Naive thymus-derived CD4-positive, alpha-beta T cell (primary cell): ENCODE measurements at regions of chr10 and their contacts with region 1.

Region 1: GRCh38 chr10:22316285-22317120 is at the start of gene COMMD3:
- DNase-seq: peak; percentile 71 to 85 (median 80)
- ATAC-seq: peak; percentile 84
- H3K4me3 ChIP-seq: peak within 1 kb of the TSS; percentile 73
- H3K4me3 Mint-ChIP-seq: peak within 1 kb of the TSS; percentile 85 to 99 (median 96)
- H3K27ac ChIP-seq: peak within 1 kb of the TSS; percentile 80
- H3K27ac Mint-ChIP-seq: peak within 1 kb of the TSS; percentile 87 to 99 (median 96)
- H3K4me1 ChIP-seq: peaks cover 16 to 25% of the 10 kb centered on the region in 2 donors
- H3K4me1 Mint-ChIP-seq: peaks cover 11 to 53% (median 46%) of the 10 kb centered on the region in 7 donors
- H3K27me3 ChIP-seq: peaks cover 0 to 13% of the 10 kb centered on the region in 2 donors
- H3K27me3 Mint-ChIP-seq: peaks cover 0 to 18% (median 14%) of the 10 kb centered on the region in 5 donors
- total RNA-seq, gene COMMD3: 33.9 to 83.7 (median 51.2) TPM

Region 2: DNA sequence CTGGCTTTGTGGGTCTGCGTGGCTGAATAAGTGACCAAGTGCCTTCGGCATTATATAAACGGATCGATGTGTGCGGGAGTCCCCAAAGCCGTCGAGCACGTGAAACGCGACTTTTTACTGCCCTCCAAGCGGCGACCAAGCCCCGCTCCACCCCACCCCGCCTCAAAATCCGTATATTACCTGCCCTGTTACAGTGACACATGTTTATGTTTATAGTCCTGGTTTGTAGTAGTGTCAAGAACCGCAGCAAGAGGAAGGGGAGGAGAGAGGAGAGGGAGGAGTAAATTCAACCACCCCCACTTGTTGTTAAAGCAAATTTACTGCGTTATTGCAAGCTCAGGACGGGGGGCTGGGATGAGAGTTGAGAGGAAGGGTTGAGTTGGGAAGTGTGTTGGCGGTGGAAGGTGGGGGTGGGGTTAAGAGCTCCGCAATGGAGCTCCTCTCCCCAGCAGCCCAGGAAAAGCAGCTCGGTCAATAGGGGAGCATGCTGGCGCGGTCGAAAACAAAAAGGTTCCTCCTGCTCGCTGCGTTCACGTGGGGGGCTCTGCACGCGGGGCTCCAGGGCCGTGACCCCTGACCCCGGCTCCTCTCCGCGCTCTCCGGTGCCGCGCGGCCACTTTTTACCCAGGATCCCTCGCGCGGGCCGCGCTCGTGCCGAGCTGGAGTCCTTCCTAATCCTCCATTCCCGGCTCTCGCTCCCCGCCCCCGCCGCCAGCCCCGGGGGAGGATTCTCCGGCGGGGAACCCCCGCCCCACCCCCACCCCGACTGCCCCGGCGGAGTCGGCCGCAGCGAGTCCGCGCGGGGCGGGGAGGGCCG is 790.9 kb before region 1 on chr10 and contains the start of gene SKIDA1:
- CTCF ChIA-PET with region 1: no interaction called
- POLR2A ChIA-PET with region 1: no interaction called
- intact Hi-C with region 1: loop called in 1 of 2 experiments (anchors 5 kb)
- DNase-seq: peak; percentile 31 to 72 (median 64)
- ATAC-seq: peak; percentile 73
- H3K4me3 ChIP-seq: peak within 1 kb of the TSS; percentile 79
- H3K4me3 Mint-ChIP-seq: peak within 1 kb of the TSS; percentile 85 to 99 (median 96)
- H3K27ac ChIP-seq: peak within 1 kb of the TSS; percentile 68
- H3K27ac Mint-ChIP-seq: peak within 1 kb of the TSS; percentile 87 to 98 (median 97)
- H3K4me1 ChIP-seq: peaks cover 4 to 17% of the 10 kb centered on the region in 2 donors
- H3K4me1 Mint-ChIP-seq: peaks cover 16 to 39% (median 38%) of the 10 kb centered on the region in 7 donors
- H3K27me3 ChIP-seq: peaks cover 4 to 6% of the 10 kb centered on the region in 2 donors
- H3K27me3 Mint-ChIP-seq: peaks cover 20 to 70% (median 38%) of the 10 kb centered on the region in 5 donors
- total RNA-seq, gene SKIDA1: 0.17 to 0.45 (median 0.28) TPM in 4 of 5 experiments, not detected in the other

Region 3: DNA sequence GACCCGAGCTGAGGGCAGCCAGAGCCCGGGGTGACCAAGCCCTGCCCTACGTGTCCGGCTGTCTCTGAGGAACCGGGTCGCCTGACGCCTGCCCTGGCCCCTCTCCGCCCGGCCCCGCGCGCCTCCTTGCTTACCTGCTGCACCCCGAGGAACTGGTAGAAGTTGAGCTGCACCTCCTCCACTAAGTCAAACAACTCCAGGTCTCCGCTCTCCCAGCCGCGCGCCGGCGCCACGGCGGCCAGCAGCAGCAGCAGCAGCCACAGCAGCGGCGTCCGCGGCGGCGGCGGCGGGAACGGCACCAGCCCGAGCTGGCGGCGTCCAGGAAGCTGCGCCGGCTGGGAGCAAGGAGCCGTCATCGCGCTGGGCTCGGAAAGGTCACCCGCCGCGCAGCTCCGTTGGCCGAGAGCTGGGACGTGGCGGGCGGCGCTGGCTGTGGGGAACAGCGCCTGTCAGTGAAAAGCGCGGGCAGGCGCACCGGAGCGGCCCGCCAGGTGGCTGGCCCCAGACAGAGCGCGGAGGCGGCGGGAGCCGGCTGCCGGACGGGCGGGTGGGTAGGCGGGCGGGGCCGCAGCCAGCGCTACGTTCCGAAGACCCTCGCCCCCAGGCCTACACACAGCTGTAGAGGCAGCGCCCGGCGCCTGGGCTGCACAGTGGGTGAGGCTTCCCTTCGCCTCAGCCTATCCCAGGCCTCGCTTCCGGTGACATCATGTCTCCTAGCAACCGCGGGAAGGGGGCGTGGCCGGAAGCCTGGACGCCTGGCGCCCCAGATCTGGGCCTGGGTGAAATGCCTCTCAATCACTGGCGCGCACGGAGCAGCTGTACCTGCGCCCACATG is 313.2 kb before region 1 on chr10 and contains the start of gene DNAJC1:
- CTCF ChIA-PET with region 1: no interaction called
- POLR2A ChIA-PET with region 1: interaction called, 3 read pairs
- intact Hi-C with region 1: loop called (anchors 1 to 2 kb)
- DNase-seq: peak; percentile 94 to 99 (median 97)
- ATAC-seq: peak; percentile 97
- H3K4me3 ChIP-seq: peak within 1 kb of the TSS; percentile 87
- H3K4me3 Mint-ChIP-seq: peak within 1 kb of the TSS; percentile 81 to 99 (median 94)
- H3K27ac ChIP-seq: peak within 1 kb of the TSS; percentile 82
- H3K27ac Mint-ChIP-seq: peak within 1 kb of the TSS; percentile 78 to 94 (median 92)
- H3K4me1 ChIP-seq: peaks cover 18 to 19% of the 10 kb centered on the region in 2 donors
- H3K4me1 Mint-ChIP-seq: peaks cover 7 to 42% (median 29%) of the 10 kb centered on the region in 7 donors
- H3K27me3 ChIP-seq: no peaks in the 10 kb centered on the region
- H3K27me3 Mint-ChIP-seq: peaks cover 0 to 15% (median 4%) of the 10 kb centered on the region in 5 donors
- total RNA-seq, gene DNAJC1: 11.0 to 23.9 (median 12.1) TPM

Region 4: DNA sequence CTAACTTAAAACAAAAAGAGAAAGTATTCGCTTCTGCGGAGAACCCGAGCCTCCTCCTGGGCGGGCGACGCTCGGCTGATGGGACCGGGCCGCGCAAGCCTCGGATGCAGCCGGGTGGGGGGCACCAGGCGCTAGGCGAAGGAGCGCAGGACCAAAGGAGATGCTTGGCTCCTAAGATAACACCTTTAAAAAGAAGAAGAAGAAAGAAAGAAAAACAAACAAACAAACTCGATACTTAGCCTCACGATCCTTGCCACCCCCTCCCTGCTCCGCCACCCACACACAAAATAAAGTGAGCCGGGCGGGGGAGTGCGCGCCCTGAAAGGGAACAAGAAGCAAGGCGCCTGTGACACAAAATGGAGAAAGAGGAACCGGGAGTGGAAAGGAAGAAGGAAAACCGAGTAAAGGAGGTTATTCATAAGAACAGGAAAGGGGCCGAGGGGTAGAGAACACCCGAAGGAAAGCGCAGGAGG is 64.7 kb before region 1 on chr10:
- CTCF ChIA-PET with region 1: no interaction called
- POLR2A ChIA-PET with region 1: interaction called, 45 read pairs
- intact Hi-C with region 1: loop called (anchors 1 kb)
- DNase-seq: peak in 8 of 9 donors; percentile 48 to 76 (median 73)
- ATAC-seq: peak; percentile 73
- H3K4me3 ChIP-seq: peak overlapping the region; percentile 82
- H3K4me3 Mint-ChIP-seq: peak overlapping the region; percentile 90 to 100 (median 94)
- H3K27ac ChIP-seq: peak overlapping the region; percentile 87
- H3K27ac Mint-ChIP-seq: peak overlapping the region; percentile 95 to 100 (median 99)
- H3K4me1 ChIP-seq: peaks cover 0 to 4% of the 10 kb centered on the region in 2 donors
- H3K4me1 Mint-ChIP-seq: peaks cover 8 to 40% (median 38%) of the 10 kb centered on the region in 7 donors
- H3K27me3 ChIP-seq: no peaks in the 10 kb centered on the region
- H3K27me3 Mint-ChIP-seq: peaks cover 8 to 31% (median 10%) of the 10 kb centered on the region in 5 donors

Region 5: DNA sequence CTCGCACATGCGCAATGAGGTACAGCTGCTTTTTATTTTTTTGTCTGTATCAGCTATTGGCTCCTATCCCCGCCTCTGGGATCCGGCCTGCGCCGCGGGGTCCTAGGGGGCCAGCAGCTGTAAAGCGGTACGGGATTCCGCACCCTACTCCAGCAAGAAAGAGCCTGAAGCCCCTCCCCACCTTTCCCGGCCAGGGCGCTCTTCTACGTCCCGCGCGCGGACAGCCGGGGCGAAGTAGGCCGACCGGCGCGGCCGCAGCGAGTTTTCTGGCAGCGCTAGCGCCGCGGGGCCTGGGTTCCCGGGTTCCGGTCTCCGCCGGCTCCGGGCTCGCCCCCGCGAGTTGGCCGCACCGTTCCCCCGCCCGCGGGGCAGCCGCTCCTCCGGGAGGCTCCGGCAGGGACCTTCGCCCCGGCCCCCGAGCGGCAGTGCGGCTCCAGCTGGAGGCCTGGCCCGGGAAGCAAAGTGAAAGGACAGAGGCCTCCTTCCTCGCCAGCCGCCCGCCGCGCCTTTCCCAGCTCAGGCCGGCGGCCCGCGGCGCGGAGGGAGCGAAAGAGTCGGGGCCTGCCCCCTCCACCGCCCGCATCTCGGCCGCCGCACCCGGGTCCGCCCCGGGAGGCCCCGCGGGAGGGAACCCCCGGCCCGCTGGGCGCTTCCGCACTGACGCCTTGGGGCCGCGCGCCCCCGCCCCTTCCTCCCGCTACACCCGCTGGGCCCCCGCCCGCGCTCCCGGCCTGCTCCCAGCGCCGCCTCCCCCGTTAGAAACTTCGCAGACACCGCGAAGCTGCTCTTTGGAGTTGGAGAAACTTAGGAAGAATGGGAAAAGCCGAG is 24.1 kb after region 1 on chr10:
- CTCF ChIA-PET with region 1: interaction called, 8 read pairs
- POLR2A ChIA-PET with region 1: interaction called, 16 read pairs
- intact Hi-C with region 1: loop called in 1 of 2 experiments (anchors 1 kb)
- DNase-seq: peak in 8 of 9 donors; percentile 41 to 80 (median 58)
- ATAC-seq: peak; percentile 59
- H3K4me3 ChIP-seq: peak overlapping the region; percentile 41
- H3K4me3 Mint-ChIP-seq: peak overlapping the region; percentile 80 to 89 (median 86)
- H3K27ac ChIP-seq: peak overlapping the region; percentile 20
- H3K27ac Mint-ChIP-seq: peak overlapping the region; percentile 56 to 93 (median 89)
- H3K4me1 ChIP-seq: peaks cover 24 to 26% of the 10 kb centered on the region in 2 donors
- H3K4me1 Mint-ChIP-seq: peaks cover 0 to 54% (median 18%) of the 10 kb centered on the region in 7 donors
- H3K27me3 ChIP-seq: peaks cover 51 to 91% of the 10 kb centered on the region in 2 donors
- H3K27me3 Mint-ChIP-seq: peaks cover 59 to 79% (median 74%) of the 10 kb centered on the region in 5 donors

Region 6: DNA sequence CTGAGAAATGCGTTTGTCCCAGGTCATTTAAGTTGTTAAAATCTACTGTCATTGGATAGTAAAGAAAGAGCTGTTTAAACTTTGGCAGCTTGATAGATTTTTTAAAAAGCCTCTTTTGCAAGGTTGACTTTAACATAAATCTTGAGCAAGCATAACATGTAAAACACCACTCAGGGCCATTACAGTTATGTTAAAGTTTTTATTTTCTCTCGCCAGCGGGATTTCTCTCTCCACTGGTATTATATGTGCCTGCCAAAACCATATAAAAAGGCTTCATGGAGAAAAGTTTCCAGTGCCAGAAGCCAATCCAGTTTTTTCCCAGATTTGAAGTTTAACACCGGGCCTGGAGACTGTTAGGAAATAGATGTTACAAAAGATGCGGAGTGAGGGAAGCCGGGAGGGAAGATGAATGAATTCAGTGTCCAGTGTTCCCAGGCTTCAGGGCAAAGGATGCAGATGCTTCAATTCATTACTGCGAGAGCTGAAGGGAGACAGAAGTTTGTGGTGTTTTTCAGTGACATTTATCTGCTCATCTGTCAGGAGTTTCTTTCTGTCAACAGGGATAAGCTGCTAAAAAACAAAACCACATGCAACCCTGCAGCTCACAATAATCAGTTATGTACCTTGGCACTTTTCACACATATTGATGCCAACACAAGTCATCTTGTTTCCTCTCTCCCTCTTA is 184.3 kb after region 1 on chr10:
- CTCF ChIA-PET with region 1: no interaction called
- POLR2A ChIA-PET with region 1: no interaction called
- intact Hi-C with region 1: no loop called
- DNase-seq: no peak
- ATAC-seq: no peak
- H3K4me3 ChIP-seq: no peak overlapping the region
- H3K4me3 Mint-ChIP-seq: no peak overlapping the region
- H3K27ac ChIP-seq: no peak overlapping the region
- H3K27ac Mint-ChIP-seq: no peak overlapping the region
- H3K4me1 ChIP-seq: peaks cover 0 to 6% of the 10 kb centered on the region in 2 donors
- H3K4me1 Mint-ChIP-seq: peaks cover 0 to 6% (median 0%) of the 10 kb centered on the region in 7 donors
- H3K27me3 ChIP-seq: no peaks in the 10 kb centered on the region
- H3K27me3 Mint-ChIP-seq: peaks cover 4 to 39% (median 9%) of the 10 kb centered on the region in 5 donors

Region 7: DNA sequence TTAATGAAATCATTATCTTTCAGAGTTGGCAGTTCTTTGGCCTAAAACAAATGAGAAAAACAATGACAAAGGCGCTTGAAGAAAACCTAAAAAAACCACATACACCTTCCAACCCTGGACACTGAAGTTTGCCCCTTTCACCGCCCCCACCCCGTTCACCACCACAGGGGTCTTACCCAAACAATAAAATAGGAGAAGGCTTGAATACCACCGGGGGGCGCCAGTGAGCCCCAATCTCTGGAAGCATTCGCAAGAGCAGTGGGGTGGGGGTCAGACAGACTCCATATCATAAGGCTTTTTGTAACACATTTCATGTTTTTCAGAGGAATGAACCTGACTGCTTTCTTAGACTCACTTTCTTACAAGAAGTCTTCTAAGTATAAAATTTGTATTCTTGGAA is 234.2 kb after region 1 on chr10:
- CTCF ChIA-PET with region 1: no interaction called
- POLR2A ChIA-PET with region 1: no interaction called
- intact Hi-C with region 1: loop called in 1 of 2 experiments (anchors 5 kb)
- DNase-seq: peak; percentile 46 to 76 (median 61)
- ATAC-seq: peak; percentile 73
- H3K4me3 ChIP-seq: no peak overlapping the region
- H3K4me3 Mint-ChIP-seq: no peak overlapping the region
- H3K27ac ChIP-seq: no peak overlapping the region
- H3K27ac Mint-ChIP-seq: peak overlapping the region in 7 of 9 donors; percentile 10 to 83 (median 61)
- H3K4me1 ChIP-seq: no peaks in the 10 kb centered on the region
- H3K4me1 Mint-ChIP-seq: peaks cover 0 to 21% (median 13%) of the 10 kb centered on the region in 7 donors
- H3K27me3 ChIP-seq: no peaks in the 10 kb centered on the region
- H3K27me3 Mint-ChIP-seq: no peaks in the 10 kb centered on the region

Region 8: DNA sequence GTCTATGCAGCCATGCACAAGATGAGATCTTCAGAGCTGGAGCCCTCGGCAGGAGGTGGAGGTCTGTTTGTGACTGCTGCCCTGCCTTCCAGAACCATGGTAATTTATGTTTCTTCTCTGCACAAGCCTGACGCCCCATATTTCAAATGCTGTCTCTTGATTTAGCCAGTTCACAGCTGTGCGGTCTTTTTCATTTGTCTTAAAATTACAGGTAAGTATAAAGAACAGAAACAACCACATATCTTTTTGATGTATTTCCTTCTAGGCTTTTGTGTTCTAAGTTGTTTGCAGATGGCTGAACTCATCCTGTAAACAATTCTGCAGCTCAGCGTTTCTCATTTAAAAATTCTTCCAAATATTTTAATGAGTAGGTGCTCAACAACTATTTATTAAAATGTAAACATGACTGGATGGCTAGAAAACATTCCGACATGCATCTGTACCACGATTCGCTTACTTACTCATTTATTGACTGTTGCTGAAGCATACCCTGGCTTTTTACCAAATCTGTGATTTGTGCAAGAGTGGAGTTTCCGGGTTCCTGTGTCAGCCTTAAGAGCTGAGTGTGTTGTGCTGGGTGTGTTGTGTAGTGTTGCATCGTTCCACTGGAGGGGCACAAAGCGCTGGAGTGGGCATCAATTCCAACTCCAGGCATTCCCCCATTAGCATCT is 338.9 kb after region 1 on chr10:
- CTCF ChIA-PET with region 1: no interaction called
- POLR2A ChIA-PET with region 1: interaction called, 3 read pairs
- intact Hi-C with region 1: loop called in 1 of 2 experiments (anchors 2 kb)
- DNase-seq: peak in 7 of 9 donors; percentile 69 to 90 (median 86)
- ATAC-seq: peak; percentile 89
- H3K4me3 ChIP-seq: peak overlapping the region; percentile 23
- H3K4me3 Mint-ChIP-seq: peak overlapping the region; percentile 67 to 87 (median 81)
- H3K27ac ChIP-seq: peak overlapping the region; percentile 54
- H3K27ac Mint-ChIP-seq: peak overlapping the region; percentile 82 to 97 (median 92)
- H3K4me1 ChIP-seq: peaks cover 84 to 88% of the 10 kb centered on the region in 2 donors
- H3K4me1 Mint-ChIP-seq: peaks cover 84 to 100% (median 90%) of the 10 kb centered on the region in 7 donors
- H3K27me3 ChIP-seq: no peaks in the 10 kb centered on the region
- H3K27me3 Mint-ChIP-seq: no peaks in the 10 kb centered on the region